Endothelial cell of umbilical vein (primary cell): ENCODE measurements at regions of chr4 and their contacts with region 1.

Region 1: DNA sequence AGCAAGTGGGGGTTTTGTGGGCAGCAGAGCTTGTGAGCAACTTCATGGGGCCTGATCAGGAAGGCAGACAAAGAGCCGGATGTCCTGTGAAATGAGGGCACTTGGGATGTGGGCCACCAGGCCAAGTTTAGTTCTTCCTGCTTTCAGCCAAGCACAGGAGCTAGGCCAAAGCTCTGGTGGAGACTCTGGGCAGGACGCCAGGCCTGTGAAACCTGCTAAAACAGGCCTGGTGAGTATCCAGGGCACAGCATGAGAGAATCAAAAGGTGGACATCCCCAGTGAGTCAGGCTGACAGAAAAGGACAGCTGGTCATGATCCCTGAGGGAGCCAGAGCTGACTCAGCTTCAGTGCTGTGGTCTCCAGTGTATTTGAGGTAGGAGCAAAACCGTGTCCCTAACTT is 95.7 kb downstream of the NPNT start:
- DNase-seq: peak; percentile 95
- H3K4me3 ChIP-seq: no peak overlapping the region
- H3K27ac ChIP-seq: peak overlapping the region; percentile 80
- H3K4me1 ChIP-seq: peaks cover 27% of the 10 kb centered on the region
- H3K27me3 ChIP-seq: no peaks in the 10 kb centered on the region
- CTCF ChIP-seq: no peak
- POLR2A ChIP-seq: no peak

Region 2: DNA sequence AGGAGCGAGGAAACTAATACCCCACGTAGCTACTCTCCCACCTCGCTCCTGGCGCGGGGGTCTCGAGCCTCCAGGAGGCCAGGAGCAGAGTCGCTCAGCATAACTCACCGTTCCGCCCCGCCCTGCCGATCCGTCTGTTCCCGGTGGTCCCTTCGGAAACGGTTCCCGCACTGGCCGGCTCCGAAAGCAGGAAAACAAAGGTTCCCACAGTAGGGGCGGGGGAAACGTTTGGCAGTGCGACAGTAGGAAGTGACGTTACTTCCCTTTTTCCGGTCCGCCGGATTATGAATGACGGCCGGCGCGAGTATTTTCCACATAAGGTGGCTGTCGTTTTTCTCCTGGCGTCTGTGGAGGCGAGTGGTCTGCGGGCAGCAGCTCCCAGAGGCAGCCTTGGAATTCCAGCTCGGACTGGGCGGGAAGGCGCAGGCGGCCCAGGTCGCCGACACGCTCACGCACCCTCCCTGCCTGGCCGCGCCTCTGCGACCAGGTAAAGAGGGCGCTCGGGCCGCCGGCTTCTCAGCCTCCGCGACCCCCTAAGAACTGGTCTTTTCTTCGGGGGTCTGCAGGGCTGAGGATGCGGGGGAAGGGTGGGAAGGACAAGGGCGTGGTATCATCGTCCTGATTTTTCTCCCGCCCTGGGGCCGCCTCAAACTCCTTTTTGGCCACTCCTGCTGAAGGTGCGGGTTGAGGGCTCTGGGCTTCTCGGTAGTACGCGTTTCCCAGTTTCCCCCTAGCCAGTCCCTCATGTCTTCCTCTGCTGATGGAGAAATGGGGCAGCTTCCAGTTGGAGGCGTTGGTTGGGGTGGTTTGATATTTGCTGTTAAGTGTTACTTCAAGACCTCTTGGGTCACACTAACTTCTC is 282.2 kb before region 1 on chr4 and contains the starts of genes GSTCD and INTS12:
- CTCF ChIA-PET with region 1: no interaction called
- POLR2A ChIA-PET with region 1: interaction called, 3 read pairs
- dilution Hi-C with region 1: no loop called
- intact Hi-C with region 1: loop called (anchors 10 kb)
- DNase-seq: peak; percentile 95
- H3K4me3 ChIP-seq: peak within 1 kb of the TSS; percentile 46 to 93 (median 93)
- H3K27ac ChIP-seq: peak within 1 kb of the TSS; percentile 61
- H3K4me1 ChIP-seq: peaks cover 16% of the 10 kb centered on the region
- H3K27me3 ChIP-seq: no peaks in the 10 kb centered on the region
- CTCF ChIP-seq: peak in 1 of 2 donors; percentile 0
- POLR2A ChIP-seq: peak; percentile 89
- total RNA-seq, gene GSTCD: 11.3 and 13.1 TPM in 2 replicates
- total RNA-seq, gene INTS12: 19.5 and 19.7 TPM in 2 replicates

Region 3: GRCh38 chr4:105765690-105766407 is 225.1 kb before region 1 on chr4:
- CTCF ChIA-PET with region 1: no interaction called
- POLR2A ChIA-PET with region 1: no interaction called
- dilution Hi-C with region 1: no loop called
- intact Hi-C with region 1: loop called (anchors 1 kb)
- DNase-seq: peak; percentile 83
- H3K4me3 ChIP-seq: no peak overlapping the region
- H3K27ac ChIP-seq: peak overlapping the region; percentile 24
- H3K4me1 ChIP-seq: peaks cover 7% of the 10 kb centered on the region
- H3K27me3 ChIP-seq: no peaks in the 10 kb centered on the region
- CTCF ChIP-seq: no peak
- POLR2A ChIP-seq: no peak

Region 4: GRCh38 chr4:105978684-105979296 is 12.1 kb before region 1 on chr4:
- CTCF ChIA-PET with region 1: interaction called, 9 read pairs
- POLR2A ChIA-PET with region 1: no interaction called
- dilution Hi-C with region 1: no loop called
- intact Hi-C with region 1: loop called (anchors 1 kb)
- DNase-seq: peak; percentile 56
- H3K4me3 ChIP-seq: no peak overlapping the region
- H3K27ac ChIP-seq: peak overlapping the region; percentile 67
- H3K4me1 ChIP-seq: peaks cover 6% of the 10 kb centered on the region
- H3K27me3 ChIP-seq: no peaks in the 10 kb centered on the region
- CTCF ChIP-seq: no peak
- POLR2A ChIP-seq: no peak

Region 5: GRCh38 chr4:106010761-106011160 is 19.8 kb after region 1 on chr4:
- CTCF ChIA-PET with region 1: no interaction called
- POLR2A ChIA-PET with region 1: no interaction called
- dilution Hi-C with region 1: no loop called
- intact Hi-C with region 1: no loop called
- DNase-seq: no peak
- H3K4me3 ChIP-seq: no peak overlapping the region
- H3K27ac ChIP-seq: no peak overlapping the region
- H3K4me1 ChIP-seq: no peaks in the 10 kb centered on the region
- H3K27me3 ChIP-seq: no peaks in the 10 kb centered on the region
- CTCF ChIP-seq: no peak
- POLR2A ChIP-seq: no peak

Region 6: DNA sequence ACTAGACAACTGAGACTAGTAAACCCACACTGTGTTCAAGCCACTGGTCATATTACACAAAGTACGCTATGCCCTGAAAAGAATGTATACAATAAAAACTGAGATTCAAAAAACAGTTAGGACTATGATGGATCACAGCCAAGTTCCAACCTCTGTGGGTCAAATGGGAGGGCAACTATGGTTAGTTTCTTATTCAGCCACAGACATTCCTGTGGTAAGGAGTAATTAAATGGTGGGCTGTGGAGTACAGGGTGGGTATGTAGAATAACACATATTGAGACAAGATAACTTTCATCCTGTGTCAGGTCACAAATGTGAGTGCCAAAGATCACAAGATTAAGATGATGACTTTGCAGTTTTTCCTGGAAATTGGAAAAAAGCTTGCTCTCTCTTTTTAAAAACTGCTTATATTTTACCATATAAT is 71.5 kb after region 1 on chr4:
- CTCF ChIA-PET with region 1: no interaction called
- POLR2A ChIA-PET with region 1: no interaction called
- dilution Hi-C with region 1: no loop called
- intact Hi-C with region 1: loop called (anchors 2 kb)
- DNase-seq: peak; percentile 82
- H3K4me3 ChIP-seq: no peak overlapping the region
- H3K27ac ChIP-seq: no peak overlapping the region
- H3K4me1 ChIP-seq: peaks cover 15% of the 10 kb centered on the region
- H3K27me3 ChIP-seq: no peaks in the 10 kb centered on the region
- CTCF ChIP-seq: no peak
- POLR2A ChIP-seq: no peak